Heart right ventricle (tissue), 16 donors: ENCODE measurements at regions of chr7 and their contacts with region 1.

Region 1: GRCh38 chr7:81919494-81919893 is 149.6 kb upstream of the HGF start:
- DNase-seq: no peak
- ATAC-seq: no peak
- H3K4me3 ChIP-seq: no peak overlapping the region
- H3K27ac ChIP-seq: no peak overlapping the region
- H3K4me1 ChIP-seq: no peaks in the 10 kb centered on the region
- H3K27me3 ChIP-seq: no peaks in the 10 kb centered on the region
- CTCF ChIP-seq: no peak

Region 2: GRCh38 chr7:81869670-81870069 is 49.8 kb before region 1 on chr7:
- intact Hi-C with region 1: loop called in 1 of 10 experiments (anchors 10 kb)
- DNase-seq: no peak
- ATAC-seq: no peak
- H3K4me3 ChIP-seq: no peak overlapping the region
- H3K27ac ChIP-seq: no peak overlapping the region
- H3K4me1 ChIP-seq: no peaks in the 10 kb centered on the region
- H3K27me3 ChIP-seq: no peaks in the 10 kb centered on the region
- CTCF ChIP-seq: no peak

Region 3: GRCh38 chr7:81973117-81973516 is 53.6 kb after region 1 on chr7:
- intact Hi-C with region 1: no loop called
- DNase-seq: no peak
- ATAC-seq: no peak
- H3K4me3 ChIP-seq: no peak overlapping the region
- H3K27ac ChIP-seq: no peak overlapping the region
- H3K4me1 ChIP-seq: peaks cover 0 to 12% (median 0%) of the 10 kb centered on the region in 9 donors
- H3K27me3 ChIP-seq: no peaks in the 10 kb centered on the region
- CTCF ChIP-seq: no peak